ENCODE measurements at regions of chr12 and their contacts with region 1.

Region 1: GRCh38 chr12:46487567-46488131 is 115.1 kb upstream of the SLC38A2 start:
- DNase-seq: no peak
- ATAC-seq: peak; percentile 92
- H3K4me3 Mint-ChIP-seq: no peak overlapping the region
- H3K27ac Mint-ChIP-seq: no peak overlapping the region
- H3K4me1 Mint-ChIP-seq: peaks cover 10% of the 10 kb centered on the region
- H3K27me3 Mint-ChIP-seq: no peaks in the 10 kb centered on the region
- CTCF ChIP-seq: no peak

Region 2: DNA sequence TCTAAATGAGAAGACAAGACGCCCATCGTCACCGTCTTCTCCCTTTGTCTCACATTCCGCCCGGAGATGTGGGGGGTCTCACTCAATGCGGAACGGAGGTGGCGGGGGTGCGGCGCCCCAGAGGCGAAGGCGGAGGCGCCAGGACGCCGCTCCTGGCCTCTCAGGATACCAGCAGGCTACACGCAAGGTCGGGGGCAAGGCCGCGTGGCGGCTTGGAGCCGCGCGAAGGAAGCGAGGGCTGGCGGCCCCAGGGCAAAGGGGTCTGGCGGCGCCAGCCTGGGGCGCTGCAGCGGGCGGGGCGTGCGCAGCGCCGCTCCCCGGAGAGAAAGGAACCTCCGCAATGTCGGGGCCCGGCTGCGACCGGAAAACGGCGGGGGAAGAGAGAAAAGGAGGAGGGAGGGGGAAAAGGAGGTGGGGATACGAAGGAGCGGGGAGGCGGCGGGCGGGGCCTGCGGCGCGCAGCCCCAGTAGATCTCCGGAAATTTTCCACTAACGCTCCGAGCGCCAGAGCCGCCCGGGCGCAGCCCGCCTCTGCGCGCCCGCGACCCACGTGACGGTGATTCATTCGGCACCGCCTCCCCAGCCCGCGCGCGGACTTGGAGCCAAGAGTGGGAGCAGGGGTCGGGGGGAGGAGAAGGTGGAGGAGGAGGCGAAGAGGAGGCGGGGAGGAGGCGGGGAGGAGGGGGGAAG is 104.5 kb before region 1 on chr12:
- CTCF ChIA-PET with region 1: no interaction called
- POLR2A ChIA-PET with region 1: interaction called, 11 read pairs
- intact Hi-C with region 1: loop called (anchors 1 kb)
- DNase-seq: peak; percentile 92
- ATAC-seq: peak; percentile 69
- H3K4me3 Mint-ChIP-seq: peak overlapping the region; percentile 91
- H3K27ac Mint-ChIP-seq: peak overlapping the region; percentile 94
- H3K4me1 Mint-ChIP-seq: peaks cover 46% of the 10 kb centered on the region
- H3K27me3 Mint-ChIP-seq: no peaks in the 10 kb centered on the region
- CTCF ChIP-seq: no peak

Region 3: GRCh38 chr12:46388427-46389021 is 99.1 kb before region 1 on chr12:
- CTCF ChIA-PET with region 1: no interaction called
- POLR2A ChIA-PET with region 1: interaction called, 11 read pairs
- intact Hi-C with region 1: loop called (anchors 1 kb)
- DNase-seq: no peak
- ATAC-seq: peak; percentile 66
- H3K4me3 Mint-ChIP-seq: peak overlapping the region; percentile 69
- H3K27ac Mint-ChIP-seq: peak overlapping the region; percentile 91
- H3K4me1 Mint-ChIP-seq: peaks cover 83% of the 10 kb centered on the region
- H3K27me3 Mint-ChIP-seq: no peaks in the 10 kb centered on the region
- CTCF ChIP-seq: no peak

Region 4: GRCh38 chr12:46446645-46447044 is 41.0 kb before region 1 on chr12:
- CTCF ChIA-PET with region 1: no interaction called
- POLR2A ChIA-PET with region 1: no interaction called
- intact Hi-C with region 1: no loop called
- DNase-seq: no peak
- ATAC-seq: no peak
- H3K4me3 Mint-ChIP-seq: no peak overlapping the region
- H3K27ac Mint-ChIP-seq: no peak overlapping the region
- H3K4me1 Mint-ChIP-seq: peaks cover 7% of the 10 kb centered on the region
- H3K27me3 Mint-ChIP-seq: no peaks in the 10 kb centered on the region
- CTCF ChIP-seq: no peak

Region 5: DNA sequence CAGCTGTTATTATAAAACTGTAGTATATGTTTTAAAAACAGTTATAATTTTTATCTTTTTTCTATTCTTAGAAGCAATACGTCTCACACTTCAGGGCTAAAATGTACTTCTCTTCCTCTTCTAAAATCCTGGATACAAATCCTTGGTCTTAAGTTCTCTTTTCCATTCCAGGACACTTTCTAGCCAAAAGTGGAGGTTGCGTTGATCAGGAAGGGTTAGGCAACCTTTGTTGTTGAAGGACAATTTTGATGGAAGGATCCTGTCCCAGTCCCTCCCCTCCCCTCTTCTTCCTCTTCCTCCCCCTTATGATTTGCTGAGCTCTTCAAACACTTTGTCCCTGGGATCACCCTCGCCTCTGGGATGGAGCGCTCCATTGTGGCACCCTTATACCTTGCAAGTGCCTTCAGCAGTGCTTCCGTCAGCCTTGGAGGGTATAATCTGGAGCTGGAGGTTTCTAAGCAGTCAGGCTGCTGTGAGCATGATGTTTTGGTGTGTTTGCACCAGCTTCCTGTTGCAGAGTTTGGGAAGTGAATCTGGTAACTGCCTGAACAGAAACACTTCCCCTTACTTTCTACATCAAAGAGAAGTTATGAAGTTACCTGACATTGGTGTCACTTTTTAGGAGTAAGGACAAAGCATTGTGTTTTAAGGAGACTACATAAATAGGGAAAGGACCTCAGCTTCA is 27.6 kb before region 1 on chr12:
- CTCF ChIA-PET with region 1: no interaction called
- POLR2A ChIA-PET with region 1: interaction called, 4 read pairs
- intact Hi-C with region 1: loop called (anchors 1 kb)
- DNase-seq: peak; percentile 18
- ATAC-seq: peak; percentile 64
- H3K4me3 Mint-ChIP-seq: peak overlapping the region; percentile 84
- H3K27ac Mint-ChIP-seq: peak overlapping the region; percentile 93
- H3K4me1 Mint-ChIP-seq: peaks cover 67% of the 10 kb centered on the region
- H3K27me3 Mint-ChIP-seq: no peaks in the 10 kb centered on the region
- CTCF ChIP-seq: no peak

Region 6: GRCh38 chr12:46473634-46474329 is 13.9 kb before region 1 on chr12:
- CTCF ChIA-PET with region 1: no interaction called
- POLR2A ChIA-PET with region 1: interaction called, 3 read pairs
- intact Hi-C with region 1: loop called (anchors 1 kb)
- DNase-seq: no peak
- ATAC-seq: peak; percentile 72
- H3K4me3 Mint-ChIP-seq: peak overlapping the region; percentile 77
- H3K27ac Mint-ChIP-seq: peak overlapping the region; percentile 75
- H3K4me1 Mint-ChIP-seq: peaks cover 23% of the 10 kb centered on the region
- H3K27me3 Mint-ChIP-seq: no peaks in the 10 kb centered on the region
- CTCF ChIP-seq: no peak

Region 7: GRCh38 chr12:46562625-46563228 is 75.1 kb after region 1 on chr12:
- CTCF ChIA-PET with region 1: no interaction called
- POLR2A ChIA-PET with region 1: no interaction called
- intact Hi-C with region 1: no loop called
- DNase-seq: no peak
- ATAC-seq: no peak
- H3K4me3 Mint-ChIP-seq: no peak overlapping the region
- H3K27ac Mint-ChIP-seq: no peak overlapping the region
- H3K4me1 Mint-ChIP-seq: no peaks in the 10 kb centered on the region
- H3K27me3 Mint-ChIP-seq: no peaks in the 10 kb centered on the region
- CTCF ChIP-seq: no peak

Measured in activated B cell treated with CpG ODN at 0.5 μM for 24 hours (primary cell).